ENCODE measurements at regions of chr5 and their contacts with region 1.

Region 1: GRCh38 chr5:169980418-169981053 is at the start of gene INSYN2B:
- DNase-seq: peak; percentile 96
- H3K4me3 ChIP-seq: peak within 1 kb of the TSS; percentile 47 to 99 (median 97)
- H3K27ac ChIP-seq: peak within 1 kb of the TSS; percentile 97
- H3K4me1 ChIP-seq: peaks cover 41% of the 10 kb centered on the region
- H3K27me3 ChIP-seq: no peaks in the 10 kb centered on the region
- CTCF ChIP-seq: peak; percentile 65 to 66
- POLR2A ChIP-seq: peak; percentile 59
- total RNA-seq, gene INSYN2B: 8.2 and 9.9 TPM in 2 replicates

Region 2: DNA sequence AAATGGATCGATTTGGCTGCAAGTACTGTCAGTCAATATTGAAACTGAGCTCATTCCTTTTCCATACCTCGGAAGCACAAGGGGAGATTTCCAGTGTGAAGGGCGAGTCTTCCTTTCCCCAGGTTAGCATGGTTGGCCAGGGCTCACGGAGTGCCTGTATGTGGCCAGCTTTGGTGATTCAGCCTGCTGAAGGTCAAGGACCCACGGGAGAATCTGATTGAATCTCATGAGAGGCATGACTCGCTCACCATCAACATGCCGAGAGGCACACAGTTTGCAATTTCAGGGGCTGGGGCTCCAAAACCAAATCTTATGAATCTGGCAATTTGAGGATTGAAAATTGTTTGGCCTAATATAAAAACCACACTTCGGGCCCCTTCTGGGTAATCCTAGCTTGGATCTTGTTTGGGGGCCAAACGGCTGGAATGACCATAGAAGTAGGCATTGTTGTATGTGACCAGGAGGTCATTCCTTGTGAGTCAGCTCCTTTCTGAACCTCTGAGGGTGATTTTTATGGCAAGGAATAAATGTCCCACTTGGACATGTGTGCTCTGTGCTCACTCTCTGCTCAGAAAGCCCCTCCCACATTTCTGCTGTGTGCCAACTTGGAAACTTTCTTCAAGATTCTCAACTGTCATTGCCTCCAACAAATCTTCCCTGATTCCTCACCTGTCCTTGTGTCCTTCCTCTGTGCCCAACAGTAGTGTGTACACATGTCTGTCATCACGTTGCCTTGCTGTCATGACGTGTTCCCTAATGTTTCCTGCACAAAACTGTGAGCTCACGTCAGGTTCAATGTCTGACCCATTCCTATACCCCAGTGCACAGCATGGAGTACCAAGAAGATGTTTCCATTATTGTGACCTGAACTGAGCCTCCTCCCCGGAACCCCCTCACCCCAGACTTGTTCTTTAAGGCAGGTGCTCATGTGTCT is 273.5 kb before region 1 on chr5:
- CTCF ChIA-PET with region 1: interaction called, 180 read pairs
- POLR2A ChIA-PET with region 1: no interaction called
- dilution Hi-C with region 1: no loop called
- intact Hi-C with region 1: loop called (anchors 1 kb)
- DNase-seq: peak; percentile 59
- H3K4me3 ChIP-seq: no peak overlapping the region
- H3K27ac ChIP-seq: peak overlapping the region; percentile 4
- H3K4me1 ChIP-seq: peaks cover 24% of the 10 kb centered on the region
- H3K27me3 ChIP-seq: no peaks in the 10 kb centered on the region
- CTCF ChIP-seq: no peak
- POLR2A ChIP-seq: no peak

Region 3: DNA sequence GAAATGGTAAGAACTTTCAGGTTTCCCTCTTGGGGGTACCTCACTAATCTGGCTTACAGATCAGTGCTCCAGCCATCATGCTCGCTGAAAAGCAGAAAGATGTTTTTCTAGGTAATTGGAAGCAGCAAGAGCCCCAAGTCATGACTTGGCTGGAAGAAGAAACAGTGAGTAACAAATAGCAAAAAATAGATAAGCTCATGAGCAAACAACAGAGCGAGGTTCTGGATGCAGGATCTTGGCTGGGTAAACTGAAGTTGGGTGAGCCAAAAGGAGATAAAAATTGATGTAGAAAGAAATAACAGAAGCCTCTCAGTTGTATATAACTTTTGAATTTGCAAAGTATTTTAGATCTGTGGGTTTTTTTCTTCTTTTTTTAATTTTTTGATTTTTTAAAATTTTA is 110.3 kb before region 1 on chr5:
- CTCF ChIA-PET with region 1: interaction called, 11 read pairs
- POLR2A ChIA-PET with region 1: no interaction called
- dilution Hi-C with region 1: no loop called
- intact Hi-C with region 1: no loop called
- DNase-seq: no peak
- H3K4me3 ChIP-seq: no peak overlapping the region
- H3K27ac ChIP-seq: no peak overlapping the region
- H3K4me1 ChIP-seq: no peaks in the 10 kb centered on the region
- H3K27me3 ChIP-seq: no peaks in the 10 kb centered on the region
- CTCF ChIP-seq: no peak
- POLR2A ChIP-seq: no peak

Region 4: GRCh38 chr5:169914766-169915165 is 65.8 kb before region 1 on chr5:
- CTCF ChIA-PET with region 1: interaction called, 27 read pairs
- POLR2A ChIA-PET with region 1: no interaction called
- dilution Hi-C with region 1: no loop called
- intact Hi-C with region 1: loop called (anchors 1 kb)
- DNase-seq: peak; percentile 10
- H3K4me3 ChIP-seq: no peak overlapping the region
- H3K27ac ChIP-seq: no peak overlapping the region
- H3K4me1 ChIP-seq: no peaks in the 10 kb centered on the region
- H3K27me3 ChIP-seq: no peaks in the 10 kb centered on the region
- CTCF ChIP-seq: no peak
- POLR2A ChIP-seq: no peak

Region 5: DNA sequence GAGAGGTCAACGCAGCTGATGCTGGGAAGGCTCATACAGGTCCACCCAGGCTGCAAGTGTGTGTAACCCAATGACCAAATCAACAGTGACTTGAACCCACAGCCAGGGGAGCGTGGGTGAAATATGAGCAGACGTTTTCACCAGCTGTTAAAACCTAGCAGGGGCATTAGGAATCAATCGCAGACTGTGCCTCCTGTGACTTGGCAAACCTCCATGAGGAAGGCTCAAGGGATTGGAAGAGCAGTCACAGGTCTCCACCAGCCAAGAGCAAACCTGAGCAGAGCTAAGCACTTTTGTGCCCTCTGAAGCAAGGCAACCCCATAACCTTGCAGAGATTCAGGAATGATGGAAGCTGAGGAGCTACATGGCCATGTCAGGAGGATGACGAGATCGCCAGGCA is 25.8 kb before region 1 on chr5:
- CTCF ChIA-PET with region 1: interaction called, 64 read pairs
- POLR2A ChIA-PET with region 1: no interaction called
- dilution Hi-C with region 1: no loop called
- intact Hi-C with region 1: no loop called
- DNase-seq: no peak
- H3K4me3 ChIP-seq: no peak overlapping the region
- H3K27ac ChIP-seq: no peak overlapping the region
- H3K4me1 ChIP-seq: peaks cover 5% of the 10 kb centered on the region
- H3K27me3 ChIP-seq: no peaks in the 10 kb centered on the region
- CTCF ChIP-seq: no peak
- POLR2A ChIP-seq: no peak

Region 6: DNA sequence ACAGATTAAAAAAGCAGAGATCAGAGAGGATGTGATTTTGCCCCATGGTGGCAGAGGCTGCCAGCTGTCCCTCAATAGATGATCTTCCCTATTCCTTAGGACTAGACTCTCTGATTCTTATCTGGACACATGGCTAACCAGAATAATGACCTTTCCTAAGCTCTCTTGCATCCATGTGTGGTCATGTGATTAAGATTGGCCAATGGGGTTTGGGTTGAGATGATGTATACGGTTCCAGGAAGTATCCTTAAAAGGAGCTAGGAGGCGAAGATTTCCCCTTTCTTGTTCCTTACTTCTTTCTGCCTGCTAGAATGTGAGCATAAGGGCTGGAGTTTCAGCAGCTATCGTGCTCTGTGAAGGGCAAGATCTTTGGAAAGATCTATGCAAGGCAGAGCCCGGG is 164.9 kb after region 1 on chr5:
- CTCF ChIA-PET with region 1: no interaction called
- POLR2A ChIA-PET with region 1: no interaction called
- dilution Hi-C with region 1: no loop called
- intact Hi-C with region 1: no loop called
- DNase-seq: no peak
- H3K4me3 ChIP-seq: no peak overlapping the region
- H3K27ac ChIP-seq: no peak overlapping the region
- H3K4me1 ChIP-seq: no peaks in the 10 kb centered on the region
- H3K27me3 ChIP-seq: no peaks in the 10 kb centered on the region
- CTCF ChIP-seq: no peak
- POLR2A ChIP-seq: no peak

Region 7: GRCh38 chr5:170183816-170184687 is 203.5 kb after region 1 on chr5:
- CTCF ChIA-PET with region 1: interaction called, 13 read pairs
- POLR2A ChIA-PET with region 1: no interaction called
- dilution Hi-C with region 1: no loop called
- intact Hi-C with region 1: no loop called
- DNase-seq: peak; percentile 65
- H3K4me3 ChIP-seq: no peak overlapping the region
- H3K27ac ChIP-seq: no peak overlapping the region
- H3K4me1 ChIP-seq: no peaks in the 10 kb centered on the region
- H3K27me3 ChIP-seq: no peaks in the 10 kb centered on the region
- CTCF ChIP-seq: peak; percentile 84 to 94
- POLR2A ChIP-seq: no peak